ENCODE measurements at regions of chr2 and their contacts with region 1.

Region 1: GRCh38 chr2:19933351-19933981 is 31.7 kb upstream of the TTC32 start:
- H3K4me3 ChIP-seq: no peak overlapping the region
- H3K27ac ChIP-seq: no peak overlapping the region
- H3K4me1 ChIP-seq: peaks cover 3% of the 10 kb centered on the region; the same call in 1 of the 2 replicates
- CTCF ChIP-seq: no peak

Region 2: GRCh38 chr2:19901442-19902215 is 31.8 kb before region 1 on chr2 and contains the start of gene TTC32:
- CTCF ChIA-PET with region 1: no interaction called
- POLR2A ChIA-PET with region 1: no interaction called
- H3K4me3 ChIP-seq: peak within 1 kb of the TSS; percentile 93
- H3K27ac ChIP-seq: peak within 1 kb of the TSS; percentile 82
- H3K4me1 ChIP-seq: peaks cover 15% of the 10 kb centered on the region
- CTCF ChIP-seq: peak; percentile 69

Region 3: DNA sequence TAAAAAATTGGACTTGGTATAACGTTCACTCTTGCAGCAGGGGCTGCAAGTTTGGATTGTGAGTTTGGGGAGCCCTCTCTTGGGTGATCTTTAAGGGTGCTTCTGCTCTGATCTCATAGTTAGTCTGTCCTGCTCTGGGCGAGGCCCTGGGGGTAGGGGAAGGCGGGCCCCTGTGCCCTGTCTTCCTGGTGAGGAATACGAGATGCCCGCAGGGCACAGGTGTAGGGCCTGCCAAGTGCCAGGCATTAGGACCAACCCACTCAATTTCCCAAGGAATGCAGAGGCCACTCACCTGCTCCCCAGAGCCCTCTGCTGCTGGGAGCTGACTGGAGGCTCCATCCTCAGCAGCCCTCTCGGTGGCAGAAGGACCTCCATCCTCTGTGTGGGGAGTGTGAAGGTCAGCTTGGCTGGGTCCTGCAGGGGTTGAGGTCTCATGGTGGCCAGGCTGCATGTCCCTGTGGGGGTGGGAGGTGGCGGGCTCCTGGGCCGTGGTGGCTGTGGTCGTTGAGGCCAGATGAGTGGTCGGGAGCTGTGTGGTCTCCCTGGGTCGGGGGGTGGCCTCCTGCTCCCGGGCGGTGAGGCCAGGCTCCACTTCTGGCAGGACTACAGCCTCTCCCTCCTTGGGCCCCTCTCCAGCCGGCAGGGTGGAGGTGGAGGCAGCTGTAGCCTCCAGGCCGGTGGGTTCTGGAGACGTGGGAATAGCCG is 270.2 kb after region 1 on chr2:
- CTCF ChIA-PET with region 1: no interaction called
- POLR2A ChIA-PET with region 1: interaction called, 10 read pairs
- H3K4me3 ChIP-seq: no peak overlapping the region
- H3K27ac ChIP-seq: no peak overlapping the region
- H3K4me1 ChIP-seq: 0 out of 2 replicates have a peak, but pooled peaks cover 3% of the 10 kb centered on the region
- CTCF ChIP-seq: no peak